ENCODE measurements at regions of chr16 and their contacts with region 1.

Region 1: GRCh38 chr16:88045820-88046303 is 94.6 kb downstream of the BANP start:
- DNase-seq: peak; percentile 98
- ATAC-seq: peak; percentile 70
- H3K4me3 ChIP-seq: no peak overlapping the region
- H3K4me3 Mint-ChIP-seq: peak overlapping the region; percentile 86
- H3K27ac ChIP-seq: peak overlapping the region; percentile 85 to 98
- H3K27ac Mint-ChIP-seq: peak overlapping the region; percentile 99
- H3K4me1 ChIP-seq: peaks cover 59 to 82% of the 10 kb centered on the region in 2 donors
- H3K4me1 Mint-ChIP-seq: peaks cover 81% of the 10 kb centered on the region
- H3K27me3 ChIP-seq: no peaks in the 10 kb centered on the region
- H3K27me3 Mint-ChIP-seq: no peaks in the 10 kb centered on the region
- CTCF ChIP-seq: no peak

Region 2: DNA sequence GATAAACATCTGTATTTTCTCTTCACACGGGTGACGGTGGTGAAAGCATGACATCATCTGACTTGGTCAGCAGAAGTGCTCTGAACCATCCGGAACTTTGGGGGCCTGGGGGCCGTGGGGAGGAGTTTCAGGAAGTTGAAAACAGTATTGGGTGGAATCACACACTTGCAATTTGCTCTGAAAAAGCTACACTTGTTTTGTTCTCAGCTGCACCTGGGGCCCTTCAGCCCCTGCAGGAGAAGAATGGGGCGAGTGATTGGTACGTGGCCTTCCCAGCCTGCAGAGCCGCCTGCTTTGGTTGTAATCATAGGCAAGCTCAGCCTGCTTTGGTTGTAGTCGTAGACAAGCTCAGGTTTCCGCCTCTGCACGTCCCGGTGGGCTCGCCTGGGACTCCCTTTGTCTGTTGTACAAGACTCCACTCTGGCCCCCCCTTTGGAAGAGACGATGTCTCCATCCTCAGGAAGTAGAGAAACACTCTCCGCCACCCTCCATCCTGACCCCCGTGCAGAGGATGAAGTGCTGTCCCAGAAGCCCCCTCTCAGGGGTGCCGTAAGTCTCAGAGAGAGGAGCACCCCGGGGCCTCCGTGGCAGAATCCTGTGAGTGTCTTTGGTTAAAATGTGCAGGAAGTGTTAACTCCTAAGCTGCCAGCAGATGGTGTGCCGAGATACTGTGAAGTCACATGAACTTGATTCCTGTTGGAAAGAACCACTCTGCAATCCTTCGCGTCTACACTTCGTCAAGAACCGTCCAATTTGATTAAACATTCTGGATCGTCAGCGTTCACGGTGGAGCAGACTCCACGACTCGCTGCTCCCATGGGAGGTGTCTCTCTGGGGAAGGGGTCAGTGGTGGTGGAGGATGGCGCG is 89.3 kb before region 1 on chr16:
- CTCF ChIA-PET with region 1: no interaction called
- POLR2A ChIA-PET with region 1: interaction called, 4 read pairs
- intact Hi-C with region 1: loop called (anchors 1 kb)
- DNase-seq: peak; percentile 93
- ATAC-seq: peak; percentile 65
- H3K4me3 ChIP-seq: peak overlapping the region; percentile 11 to 62 (median 42)
- H3K4me3 Mint-ChIP-seq: peak overlapping the region; percentile 91
- H3K27ac ChIP-seq: peak overlapping the region; percentile 79 to 87
- H3K27ac Mint-ChIP-seq: peak overlapping the region; percentile 95
- H3K4me1 ChIP-seq: peaks cover 60 to 84% of the 10 kb centered on the region in 2 donors
- H3K4me1 Mint-ChIP-seq: peaks cover 84% of the 10 kb centered on the region
- H3K27me3 ChIP-seq: no peaks in the 10 kb centered on the region
- H3K27me3 Mint-ChIP-seq: no peaks in the 10 kb centered on the region
- CTCF ChIP-seq: no peak

Region 3: GRCh38 chr16:88005181-88005581 is 40.7 kb before region 1 on chr16:
- CTCF ChIA-PET with region 1: no interaction called
- POLR2A ChIA-PET with region 1: no interaction called
- intact Hi-C with region 1: loop called (anchors 1 kb)
- DNase-seq: peak; percentile 72
- ATAC-seq: peak; percentile 86
- H3K4me3 ChIP-seq: no peak overlapping the region
- H3K4me3 Mint-ChIP-seq: peak overlapping the region; percentile 33
- H3K27ac ChIP-seq: peak overlapping the region; percentile 51 to 60
- H3K27ac Mint-ChIP-seq: peak overlapping the region; percentile 54
- H3K4me1 ChIP-seq: peaks cover 17 to 24% of the 10 kb centered on the region in 2 donors
- H3K4me1 Mint-ChIP-seq: peaks cover 41% of the 10 kb centered on the region
- H3K27me3 ChIP-seq: no peaks in the 10 kb centered on the region
- H3K27me3 Mint-ChIP-seq: no peaks in the 10 kb centered on the region
- CTCF ChIP-seq: peak; percentile 72

Region 4: GRCh38 chr16:88069397-88070168 is 23.7 kb after region 1 on chr16:
- CTCF ChIA-PET with region 1: interaction called, 3 read pairs
- POLR2A ChIA-PET with region 1: interaction called, 4 read pairs
- intact Hi-C with region 1: loop called (anchors 1 kb)
- DNase-seq: peak; percentile 97
- ATAC-seq: peak; percentile 93
- H3K4me3 ChIP-seq: peak overlapping the region in 2 of 5 experiments; percentile 12 to 42
- H3K4me3 Mint-ChIP-seq: peak overlapping the region; percentile 82
- H3K27ac ChIP-seq: peak overlapping the region; percentile 82 to 97
- H3K27ac Mint-ChIP-seq: peak overlapping the region; percentile 95
- H3K4me1 ChIP-seq: peaks cover 50 to 58% of the 10 kb centered on the region in 2 donors
- H3K4me1 Mint-ChIP-seq: peaks cover 51% of the 10 kb centered on the region
- H3K27me3 ChIP-seq: no peaks in the 10 kb centered on the region
- H3K27me3 Mint-ChIP-seq: no peaks in the 10 kb centered on the region
- CTCF ChIP-seq: no peak

Region 5: DNA sequence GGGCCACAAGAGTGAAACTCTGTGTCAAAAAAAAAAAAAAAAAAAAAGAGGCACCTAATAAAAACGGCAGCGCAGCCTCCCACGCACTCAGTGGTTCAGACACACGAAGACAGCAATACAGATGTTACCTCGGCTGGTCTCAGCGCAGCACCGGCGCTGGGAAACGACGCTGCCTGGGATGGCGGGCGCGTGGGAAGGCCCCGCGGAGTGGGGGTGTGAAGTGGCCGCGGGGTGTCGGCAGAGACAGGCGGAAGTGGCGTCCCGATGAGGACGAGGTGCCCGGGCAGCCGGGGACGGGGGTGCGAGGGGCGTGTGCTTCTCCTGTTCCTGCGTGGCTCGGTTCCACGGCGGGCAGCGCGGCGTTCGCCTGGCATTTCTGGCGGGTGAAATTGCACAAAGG is 84.8 kb after region 1 on chr16:
- CTCF ChIA-PET with region 1: no interaction called
- POLR2A ChIA-PET with region 1: no interaction called
- intact Hi-C with region 1: no loop called
- DNase-seq: no peak
- ATAC-seq: no peak
- H3K4me3 ChIP-seq: no peak overlapping the region
- H3K4me3 Mint-ChIP-seq: no peak overlapping the region
- H3K27ac ChIP-seq: no peak overlapping the region
- H3K27ac Mint-ChIP-seq: no peak overlapping the region
- H3K4me1 ChIP-seq: no peaks in the 10 kb centered on the region
- H3K4me1 Mint-ChIP-seq: no peaks in the 10 kb centered on the region
- H3K27me3 ChIP-seq: no peaks in the 10 kb centered on the region
- H3K27me3 Mint-ChIP-seq: peaks cover 3% of the 10 kb centered on the region
- CTCF ChIP-seq: no peak

Region 6: GRCh38 chr16:88194397-88195268 is 148.8 kb after region 1 on chr16:
- CTCF ChIA-PET with region 1: no interaction called
- POLR2A ChIA-PET with region 1: no interaction called
- intact Hi-C with region 1: no loop called
- DNase-seq: no peak
- ATAC-seq: no peak
- H3K4me3 ChIP-seq: no peak overlapping the region
- H3K4me3 Mint-ChIP-seq: no peak overlapping the region
- H3K27ac ChIP-seq: no peak overlapping the region
- H3K27ac Mint-ChIP-seq: no peak overlapping the region
- H3K4me1 ChIP-seq: no peaks in the 10 kb centered on the region
- H3K4me1 Mint-ChIP-seq: peaks cover 2% of the 10 kb centered on the region
- H3K27me3 ChIP-seq: no peaks in the 10 kb centered on the region
- H3K27me3 Mint-ChIP-seq: peaks cover 5% of the 10 kb centered on the region
- CTCF ChIP-seq: no peak

Region 7: DNA sequence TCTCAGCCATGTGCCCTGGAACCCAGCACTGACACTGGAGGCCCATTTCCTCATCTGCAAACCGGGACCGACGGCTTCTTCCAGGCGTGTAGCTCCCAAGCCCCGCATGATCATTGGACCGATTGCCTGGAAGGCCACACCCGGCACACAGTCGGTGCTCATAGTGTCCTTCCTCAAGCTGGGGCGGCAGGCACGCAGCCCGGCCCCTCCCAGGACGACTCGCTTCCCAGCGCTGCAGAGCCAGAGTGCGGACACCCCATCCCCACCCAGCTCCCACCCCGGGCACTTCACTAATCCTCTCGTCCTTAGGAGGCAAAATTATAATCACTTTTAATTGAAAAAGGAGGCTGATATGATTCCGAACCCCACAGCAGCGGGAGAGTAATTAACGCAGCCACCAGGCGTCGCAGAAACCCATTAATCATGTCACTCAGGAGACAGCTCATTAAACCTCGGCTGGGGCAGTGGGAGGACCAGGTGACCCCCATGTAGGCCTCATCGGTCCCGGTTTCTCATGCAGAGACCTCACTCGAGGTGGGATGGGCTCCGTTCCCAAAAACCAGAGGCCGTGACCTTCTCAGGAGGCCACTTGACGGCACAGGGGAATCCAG is 370.0 kb after region 1 on chr16:
- CTCF ChIA-PET with region 1: no interaction called
- POLR2A ChIA-PET with region 1: no interaction called
- intact Hi-C with region 1: no loop called
- DNase-seq: no peak
- ATAC-seq: no peak
- H3K4me3 ChIP-seq: no peak overlapping the region
- H3K4me3 Mint-ChIP-seq: no peak overlapping the region
- H3K27ac ChIP-seq: no peak overlapping the region
- H3K27ac Mint-ChIP-seq: no peak overlapping the region
- H3K4me1 ChIP-seq: no peaks in the 10 kb centered on the region
- H3K4me1 Mint-ChIP-seq: no peaks in the 10 kb centered on the region
- H3K27me3 ChIP-seq: peaks cover 0 to 2% (median 0%) of the 10 kb centered on the region in 4 experiments
- H3K27me3 Mint-ChIP-seq: no peaks in the 10 kb centered on the region
- CTCF ChIP-seq: no peak

Measured in B cell (primary cell).